ENCODE measurements at regions of chr4 and their contacts with region 1.

Region 1: GRCh38 chr4:78612398-78613178 is 61.0 kb downstream of the ANXA3 start:
- DNase-seq: no peak
- H3K4me3 Mint-ChIP-seq: no peak overlapping the region
- H3K27ac Mint-ChIP-seq: no peak overlapping the region
- H3K4me1 Mint-ChIP-seq: peaks cover 61% of the 10 kb centered on the region
- H3K27me3 Mint-ChIP-seq: no peaks in the 10 kb centered on the region

Region 2: GRCh38 chr4:77959566-77960338 is 652.8 kb before region 1 on chr4:
- intact Hi-C with region 1: loop called (anchors 5 kb)
- DNase-seq: no peak
- H3K4me3 Mint-ChIP-seq: no peak overlapping the region
- H3K27ac Mint-ChIP-seq: no peak overlapping the region
- H3K4me1 Mint-ChIP-seq: no peaks in the 10 kb centered on the region
- H3K27me3 Mint-ChIP-seq: peaks cover under 1% of the 10 kb centered on the region

Region 3: DNA sequence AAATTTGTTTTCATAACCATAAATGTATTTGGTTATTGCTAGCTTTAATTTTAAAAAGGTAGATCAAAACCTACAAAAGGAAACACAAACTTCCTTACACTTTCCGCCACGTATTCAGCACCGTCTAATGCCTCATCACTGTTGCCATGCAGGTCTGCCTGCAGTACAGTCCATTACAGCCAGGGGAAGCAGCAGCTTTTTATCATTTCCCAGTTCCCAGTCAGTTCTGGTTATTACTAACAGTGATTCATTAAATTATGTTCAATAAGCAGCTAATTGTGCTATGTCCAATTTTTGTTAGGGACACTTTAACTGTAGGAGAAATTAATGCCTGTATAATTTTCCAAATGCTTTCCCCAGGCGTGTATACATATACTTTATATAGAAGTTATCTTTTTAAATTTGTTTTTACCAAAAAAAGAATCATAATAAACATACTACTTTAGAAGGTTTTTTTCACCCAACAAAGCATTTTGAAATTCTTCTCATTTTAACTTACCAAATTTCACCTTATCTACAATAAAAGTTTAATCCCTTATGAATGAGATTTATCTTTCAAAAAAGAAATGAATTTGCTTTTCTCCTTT is 32.2 kb after region 1 on chr4:
- intact Hi-C with region 1: loop called (anchors 2 kb)
- DNase-seq: peak; percentile 20
- H3K4me3 Mint-ChIP-seq: no peak overlapping the region
- H3K27ac Mint-ChIP-seq: no peak overlapping the region
- H3K4me1 Mint-ChIP-seq: peaks cover 50% of the 10 kb centered on the region
- H3K27me3 Mint-ChIP-seq: no peaks in the 10 kb centered on the region

Region 4: DNA sequence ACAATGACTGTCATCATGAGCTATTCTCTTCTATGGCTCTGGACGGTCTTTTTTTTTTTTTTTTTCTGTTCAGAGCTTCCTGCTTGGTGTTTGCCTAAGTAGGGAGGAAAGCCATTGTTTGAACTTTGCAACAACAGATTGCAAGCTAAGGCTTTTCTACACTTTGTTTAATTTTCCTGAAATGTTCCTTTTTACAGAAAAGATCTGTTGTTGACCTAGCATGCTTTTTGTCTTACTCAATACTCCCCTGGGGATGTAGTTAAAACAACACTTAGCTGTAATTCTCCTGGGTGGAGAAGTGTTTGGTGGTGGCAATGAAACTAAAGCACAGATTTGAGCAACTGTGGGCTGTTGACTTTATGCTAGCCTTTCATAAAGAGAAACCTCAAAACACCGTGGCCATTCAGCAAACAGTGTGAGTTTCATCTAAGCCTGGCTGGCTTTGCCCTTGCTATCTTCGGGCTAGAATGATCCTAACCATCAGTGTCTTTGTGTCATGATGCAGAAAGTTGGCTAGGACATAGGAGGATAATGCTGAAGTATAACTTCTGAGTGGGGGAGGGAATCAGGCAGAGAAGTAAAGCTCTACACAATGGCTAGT is 49.4 kb after region 1 on chr4:
- intact Hi-C with region 1: loop called (anchors 1 kb)
- DNase-seq: no peak
- H3K4me3 Mint-ChIP-seq: no peak overlapping the region
- H3K27ac Mint-ChIP-seq: no peak overlapping the region
- H3K4me1 Mint-ChIP-seq: peaks cover 77% of the 10 kb centered on the region
- H3K27me3 Mint-ChIP-seq: no peaks in the 10 kb centered on the region

Region 5: GRCh38 chr4:78864405-78865024 is 251.9 kb after region 1 on chr4:
- intact Hi-C with region 1: loop called (anchors 1 kb)
- DNase-seq: peak; percentile 12
- H3K4me3 Mint-ChIP-seq: no peak overlapping the region
- H3K27ac Mint-ChIP-seq: no peak overlapping the region
- H3K4me1 Mint-ChIP-seq: peaks cover 15% of the 10 kb centered on the region
- H3K27me3 Mint-ChIP-seq: no peaks in the 10 kb centered on the region